Activated T-helper 1 cell treated with anti-CD3 and anti-CD28 coated beads, Interleukin-12 subunit alpha, Interleukin-12 subunit beta, Interleukin-2, Interleukin-4 antibody, amounts not matched to agents 30 ng/mL and 10 ng/mL and 1 ng/mL, durations not matched to agents 14 hours and 24 hours and 36 hours (primary cell): ENCODE measurements at regions of chr1 and their contacts with region 1.

Region 1: DNA sequence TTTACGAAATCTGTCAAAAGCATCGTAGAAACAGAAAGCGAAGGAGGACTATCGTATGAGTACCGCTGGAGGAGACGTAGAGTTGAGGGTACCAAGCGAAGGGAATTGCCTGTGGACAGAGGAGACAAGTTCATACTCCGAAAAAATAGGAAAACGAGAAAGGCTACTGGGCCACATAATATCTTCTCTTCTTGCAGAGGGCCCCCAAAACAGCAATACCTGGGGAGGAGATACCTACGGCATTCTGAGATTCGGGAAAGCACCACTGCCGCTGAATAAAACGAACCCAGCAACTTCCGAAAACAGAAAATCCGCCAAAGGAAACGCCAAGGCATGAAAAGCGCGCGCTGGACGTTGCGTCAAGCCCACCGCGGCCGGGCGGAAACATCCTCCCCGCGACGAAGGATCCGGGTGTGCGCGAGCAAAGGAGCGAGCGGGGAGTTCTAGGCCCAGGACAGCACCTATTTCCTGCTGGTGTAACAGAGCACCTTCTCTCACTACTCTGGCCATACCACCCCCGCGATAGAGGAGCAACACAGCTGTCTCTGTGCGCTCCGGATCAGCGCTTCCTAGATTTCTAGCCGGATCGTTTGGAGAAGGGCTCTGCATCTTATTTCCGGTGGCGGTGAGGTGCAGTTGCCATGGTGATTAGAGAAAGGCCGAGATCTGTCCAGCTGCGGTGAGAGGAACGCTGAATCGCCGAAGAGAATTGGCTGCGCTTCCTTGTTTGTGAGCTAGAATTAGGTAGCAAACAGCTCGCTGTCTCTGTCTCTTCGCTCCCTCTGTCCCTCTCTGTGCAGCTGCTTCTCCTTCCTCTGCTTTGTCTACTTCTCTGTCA is at the starts of genes EFCAB7 and ITGB3BP:
- DNase-seq: peak; percentile 80
- H3K4me3 Mint-ChIP-seq: peak within 1 kb of the TSS; percentile 99
- H3K27ac Mint-ChIP-seq: peak within 1 kb of the TSS; percentile 94
- H3K4me1 Mint-ChIP-seq: peaks cover 53% of the 10 kb centered on the region
- H3K27me3 Mint-ChIP-seq: no peaks in the 10 kb centered on the region
- total RNA-seq, gene EFCAB7: 6.4 and 6.7 TPM in 2 replicates
- total RNA-seq, gene ITGB3BP: 44.1 and 49.8 TPM in 2 replicates

Region 2: GRCh38 chr1:62783723-62784508 is 739.2 kb before region 1 on chr1 and contains the start of gene ATG4C:
- intact Hi-C with region 1: loop called (anchors 2 kb)
- DNase-seq: peak; percentile 90
- H3K4me3 Mint-ChIP-seq: no peak within 1 kb of the TSS
- H3K27ac Mint-ChIP-seq: no peak within 1 kb of the TSS
- H3K4me1 Mint-ChIP-seq: peaks cover 8% of the 10 kb centered on the region
- H3K27me3 Mint-ChIP-seq: peaks cover 4% of the 10 kb centered on the region
- total RNA-seq, gene ATG4C: 8.8 TPM in 2 replicates

Region 3: GRCh38 chr1:63327417-63328139 is 195.5 kb before region 1 on chr1:
- intact Hi-C with region 1: loop called (anchors 5 kb)
- DNase-seq: peak; percentile 37
- H3K4me3 Mint-ChIP-seq: peak overlapping the region; percentile 17
- H3K27ac Mint-ChIP-seq: peak overlapping the region; percentile 72
- H3K4me1 Mint-ChIP-seq: peaks cover 17% of the 10 kb centered on the region
- H3K27me3 Mint-ChIP-seq: peaks cover 78% of the 10 kb centered on the region

Region 4: GRCh38 chr1:63367215-63368103 is 155.7 kb before region 1 on chr1 and contains the start of gene ALG6:
- intact Hi-C with region 1: loop called (anchors 1 kb)
- DNase-seq: peak; percentile 93
- H3K4me3 Mint-ChIP-seq: peak within 1 kb of the TSS; percentile 90
- H3K27ac Mint-ChIP-seq: peak within 1 kb of the TSS; percentile 74
- H3K4me1 Mint-ChIP-seq: peaks cover 16% of the 10 kb centered on the region
- H3K27me3 Mint-ChIP-seq: peaks cover under 1% of the 10 kb centered on the region
- total RNA-seq, gene ALG6: 25.8 and 26.9 TPM in 2 replicates

Region 5: GRCh38 chr1:63773815-63774616 is 250.9 kb after region 1 on chr1 and contains the start of gene ROR1:
- intact Hi-C with region 1: loop called (anchors 5 kb)
- DNase-seq: peak; percentile 43
- H3K4me3 Mint-ChIP-seq: peak within 1 kb of the TSS; percentile 85
- H3K27ac Mint-ChIP-seq: peak within 1 kb of the TSS; percentile 53
- H3K4me1 Mint-ChIP-seq: peaks cover 22% of the 10 kb centered on the region
- H3K27me3 Mint-ChIP-seq: peaks cover 62% of the 10 kb centered on the region
- total RNA-seq, gene ROR1: 0.05 TPM in 1 of 2 replicates, not detected in the other